Natural killer cell (primary cell): ENCODE measurements at regions of chr5 and their contacts with region 1.

Region 1: DNA sequence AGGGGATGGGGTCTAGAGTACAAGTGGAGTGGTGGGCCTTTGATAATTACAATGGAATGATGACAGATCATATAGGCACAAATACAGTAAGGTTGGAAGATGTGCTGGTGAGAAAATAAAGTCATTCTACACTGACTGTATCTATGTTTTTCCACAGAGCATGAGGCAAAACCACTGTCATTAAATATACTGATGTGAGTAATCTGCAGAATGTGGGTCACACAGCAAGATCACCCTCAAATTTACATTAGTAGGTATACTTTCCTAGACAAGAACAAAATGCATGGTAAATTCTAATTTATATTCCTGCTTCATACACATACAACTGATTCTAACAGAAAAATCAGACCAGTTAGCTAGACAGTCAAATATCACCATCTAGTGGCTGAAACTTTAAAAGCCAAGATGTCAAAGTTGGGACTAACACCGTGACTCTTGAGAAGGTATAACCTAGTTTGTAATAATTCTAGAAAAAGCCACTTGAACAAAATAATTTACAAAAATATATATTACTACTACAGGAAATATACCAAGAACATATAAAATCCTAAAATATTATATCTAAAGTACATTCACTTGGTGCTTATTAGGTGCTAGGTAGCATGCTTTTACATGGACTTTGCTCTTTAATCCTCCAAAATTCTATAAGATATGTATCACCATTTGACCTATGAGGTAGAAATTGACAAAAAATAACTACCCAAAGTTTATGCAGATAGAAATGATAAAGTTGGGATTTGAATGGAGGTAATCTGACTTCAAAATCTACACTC is 19.5 kb downstream of the TTC33 start:
- DNase-seq: peak in 1 of 2 donors; percentile 80
- ATAC-seq: peak; percentile 72 to 83 (median 78)
- H3K4me3 ChIP-seq: no peak overlapping the region
- H3K4me3 Mint-ChIP-seq: no peak overlapping the region
- H3K27ac ChIP-seq: no peak overlapping the region
- H3K27ac Mint-ChIP-seq: no peak overlapping the region
- H3K4me1 ChIP-seq: peaks cover 3% of the 10 kb centered on the region
- H3K4me1 Mint-ChIP-seq: peaks cover 36 to 43% of the 10 kb centered on the region in 2 donors
- H3K27me3 ChIP-seq: no peaks in the 10 kb centered on the region
- H3K27me3 Mint-ChIP-seq: no peaks in the 10 kb centered on the region
- CTCF ChIP-seq: peak; percentile 90

Region 2: GRCh38 chr5:39578887-39579497 is 1157.3 kb before region 1 on chr5:
- intact Hi-C with region 1: loop called (anchors 1 kb)
- DNase-seq: peak in 1 of 2 donors; percentile 57
- ATAC-seq: no peak
- H3K4me3 ChIP-seq: no peak overlapping the region
- H3K4me3 Mint-ChIP-seq: no peak overlapping the region
- H3K27ac ChIP-seq: no peak overlapping the region
- H3K27ac Mint-ChIP-seq: no peak overlapping the region
- H3K4me1 ChIP-seq: no peaks in the 10 kb centered on the region
- H3K4me1 Mint-ChIP-seq: no peaks in the 10 kb centered on the region
- H3K27me3 ChIP-seq: no peaks in the 10 kb centered on the region
- H3K27me3 Mint-ChIP-seq: peaks cover 5 to 22% of the 10 kb centered on the region in 2 donors
- CTCF ChIP-seq: peak; percentile 92

Region 3: GRCh38 chr5:39948867-39949468 is 787.3 kb before region 1 on chr5:
- intact Hi-C with region 1: loop called (anchors 1 kb)
- DNase-seq: peak; percentile 15 to 87
- ATAC-seq: peak; percentile 87 to 90 (median 89)
- H3K4me3 ChIP-seq: no peak overlapping the region
- H3K4me3 Mint-ChIP-seq: no peak overlapping the region
- H3K27ac ChIP-seq: no peak overlapping the region
- H3K27ac Mint-ChIP-seq: no peak overlapping the region
- H3K4me1 ChIP-seq: no peaks in the 10 kb centered on the region
- H3K4me1 Mint-ChIP-seq: peaks cover 0 to 4% of the 10 kb centered on the region in 2 donors
- H3K27me3 ChIP-seq: no peaks in the 10 kb centered on the region
- H3K27me3 Mint-ChIP-seq: no peaks in the 10 kb centered on the region
- CTCF ChIP-seq: peak; percentile 82

Region 4: DNA sequence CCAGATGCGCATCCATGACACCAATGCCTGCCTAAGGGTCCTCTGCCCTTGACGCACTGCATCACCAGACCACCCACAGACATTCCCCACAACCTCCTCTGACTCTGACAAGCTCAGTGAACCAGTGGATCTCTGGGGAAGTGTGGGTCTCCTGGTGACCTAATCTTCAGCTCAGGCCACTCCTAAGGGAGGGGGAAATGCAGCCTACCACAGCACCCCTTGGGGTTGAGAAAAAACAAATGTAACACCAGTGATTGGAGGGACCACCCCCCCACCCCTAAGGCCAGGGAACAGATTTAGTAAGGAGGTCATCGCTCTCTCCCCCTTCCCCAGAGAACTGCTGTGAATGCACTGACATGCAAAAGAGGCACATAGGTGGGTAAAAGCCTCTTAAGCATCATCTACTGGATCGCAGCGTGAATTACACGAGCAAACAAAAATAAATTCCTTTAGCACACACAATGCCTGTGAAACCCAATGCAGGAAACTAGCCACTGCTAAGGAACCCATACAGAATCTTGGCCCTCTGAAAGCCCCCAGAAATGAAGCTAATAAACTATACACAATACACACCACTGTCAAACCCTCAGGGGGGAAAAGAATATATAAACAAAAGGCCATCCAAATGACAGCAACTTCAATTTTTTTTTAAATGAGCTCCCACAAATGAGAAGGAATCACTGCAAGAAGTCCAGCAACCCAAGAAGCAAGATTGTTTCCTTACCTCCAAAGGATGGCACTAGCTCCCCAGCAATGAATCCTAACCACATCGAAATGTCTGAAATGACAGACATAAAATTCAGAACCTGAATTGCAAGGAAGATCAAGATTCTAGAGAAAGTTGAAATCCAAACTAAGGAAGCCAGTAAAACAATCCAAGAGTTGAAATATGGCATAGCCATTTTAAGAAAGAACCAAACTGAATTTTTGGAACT is 570.2 kb before region 1 on chr5:
- intact Hi-C with region 1: loop called (anchors 1 kb)
- DNase-seq: peak in 1 of 2 donors; percentile 48
- ATAC-seq: no peak
- H3K4me3 ChIP-seq: no peak overlapping the region
- H3K4me3 Mint-ChIP-seq: no peak overlapping the region
- H3K27ac ChIP-seq: no peak overlapping the region
- H3K27ac Mint-ChIP-seq: peak overlapping the region in 1 of 2 donors; percentile 12
- H3K4me1 ChIP-seq: no peaks in the 10 kb centered on the region
- H3K4me1 Mint-ChIP-seq: peaks cover 0 to 4% of the 10 kb centered on the region in 2 donors
- H3K27me3 ChIP-seq: no peaks in the 10 kb centered on the region
- H3K27me3 Mint-ChIP-seq: peaks cover 5 to 7% of the 10 kb centered on the region in 2 donors
- CTCF ChIP-seq: no peak